Activated CD4-positive, alpha-beta T cell treated with anti-CD3 and anti-CD28 coated beads, Interleukin-2, amount 10 ng/mL, durations not matched to agents 24 days and 14 days (primary cell): ENCODE measurements at regions of chr5 and their contacts with region 1.

Region 1: DNA sequence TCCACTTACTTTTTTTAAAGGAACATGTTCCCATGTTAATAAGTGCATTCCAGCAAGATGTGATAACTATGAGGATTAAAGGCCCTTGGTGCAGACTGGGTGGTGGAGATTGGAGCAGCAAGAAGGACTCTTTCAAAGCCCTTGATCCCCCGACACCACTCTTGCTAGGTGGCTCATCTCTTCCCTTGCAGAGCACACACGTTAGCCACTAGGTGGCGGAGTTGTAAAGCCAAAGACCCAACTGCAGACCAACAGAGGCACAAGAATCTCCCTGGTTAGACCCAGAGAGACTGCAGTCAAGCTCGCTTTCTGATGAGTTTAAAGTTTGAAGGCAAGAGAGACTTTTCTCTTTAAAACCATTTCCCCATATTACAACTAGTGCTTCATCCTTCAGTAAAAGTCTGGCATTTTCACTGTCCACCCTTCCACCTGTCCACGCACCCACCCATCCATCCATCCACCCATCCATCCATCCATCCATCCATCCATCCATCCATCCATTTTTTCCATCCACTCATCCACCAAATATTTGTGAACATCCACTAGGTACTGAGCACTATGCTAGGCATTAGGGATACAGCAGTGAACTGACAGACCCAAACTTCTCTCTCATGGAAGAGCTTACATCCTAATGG is 226.9 kb downstream of the MSX2 start:
- DNase-seq: peak; percentile 86
- H3K4me3 Mint-ChIP-seq: no peak overlapping the region
- H3K27ac Mint-ChIP-seq: peak overlapping the region; percentile 23
- H3K4me1 Mint-ChIP-seq: no peaks in the 10 kb centered on the region
- H3K27me3 Mint-ChIP-seq: peaks cover 4% of the 10 kb centered on the region

Region 2: GRCh38 chr5:175444060-175444904 is 493.0 kb after region 1 on chr5 and contains the start of gene DRD1:
- intact Hi-C with region 1: loop called (anchors 2 kb)
- DNase-seq: peak; percentile 86
- H3K4me3 Mint-ChIP-seq: peak within 1 kb of the TSS; percentile 68
- H3K27ac Mint-ChIP-seq: no peak within 1 kb of the TSS
- H3K4me1 Mint-ChIP-seq: peaks cover 5% of the 10 kb centered on the region
- H3K27me3 Mint-ChIP-seq: peaks cover 76% of the 10 kb centered on the region
- total RNA-seq, gene DRD1: 0.07 TPM in 1 of 2 replicates, not detected in the other

Region 3: DNA sequence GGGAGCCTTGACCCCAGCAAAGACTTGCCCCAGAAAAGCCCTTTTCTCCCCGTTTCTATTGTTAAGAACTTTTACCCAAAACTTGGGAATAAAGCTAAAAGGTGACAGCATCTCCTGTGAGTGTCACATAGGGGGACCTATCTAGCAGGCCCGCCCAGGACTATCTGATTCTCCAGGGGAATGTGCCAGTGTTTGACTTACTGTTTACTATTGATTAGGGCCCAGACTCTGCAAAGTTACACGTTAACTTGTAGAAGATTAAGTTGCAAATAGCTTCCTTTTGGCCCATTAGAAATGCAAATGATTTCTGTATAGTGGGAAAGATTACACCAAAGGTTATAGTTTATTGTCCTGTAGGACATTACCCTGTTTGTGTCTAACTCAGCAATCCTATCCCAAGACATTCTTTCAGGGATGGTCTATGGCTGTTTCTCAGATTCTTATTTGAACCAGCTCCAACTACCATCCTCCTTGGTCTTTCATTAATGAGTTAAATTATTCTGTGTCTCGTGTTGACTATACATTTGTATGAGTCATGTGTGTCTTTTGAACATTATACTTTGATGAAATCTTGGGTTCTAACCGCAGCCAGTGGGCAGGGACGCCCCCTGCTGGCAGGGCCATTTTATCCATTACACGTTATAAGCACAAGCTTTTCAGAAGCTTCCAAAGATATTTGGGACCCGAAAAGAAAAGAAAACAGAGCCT is 767.3 kb after region 1 on chr5:
- intact Hi-C with region 1: loop called (anchors 5 kb)
- DNase-seq: peak; percentile 86
- H3K4me3 Mint-ChIP-seq: no peak overlapping the region
- H3K27ac Mint-ChIP-seq: no peak overlapping the region
- H3K4me1 Mint-ChIP-seq: peaks cover 4% of the 10 kb centered on the region
- H3K27me3 Mint-ChIP-seq: peaks cover 1% of the 10 kb centered on the region